ENCODE measurements at regions of chr10 and their contacts with region 1.

Region 1: DNA sequence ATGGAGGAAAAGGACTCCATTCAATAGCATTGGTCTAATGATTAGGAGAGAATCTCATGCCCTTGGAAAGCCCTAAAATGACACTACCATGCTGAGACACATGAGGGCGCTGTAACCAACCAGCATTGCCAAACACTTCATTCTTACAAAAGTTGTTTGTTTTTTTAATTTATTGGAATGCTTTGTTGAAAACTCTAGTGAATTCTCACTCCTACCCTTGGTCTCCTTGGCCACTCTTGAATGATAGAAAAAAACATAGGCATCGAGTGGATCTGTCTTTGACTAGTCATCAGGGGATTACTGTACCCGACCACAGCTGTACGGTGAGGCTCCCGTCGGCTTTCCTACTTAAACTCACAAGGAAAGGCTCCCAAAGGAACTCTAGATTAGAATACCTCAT is 29.3 kb upstream of the ADD3 start:
- DNase-seq: no peak
- ATAC-seq: peak; percentile 77
- H3K4me3 ChIP-seq: no peak overlapping the region
- H3K27ac ChIP-seq: no peak overlapping the region
- H3K4me1 ChIP-seq: no peaks in the 10 kb centered on the region
- H3K27me3 ChIP-seq: peaks cover 0 to 2% of the 10 kb centered on the region in 2 experiments; a peak in 1 of 4 replicates
- CTCF ChIP-seq: peak; percentile 74 to 86 (median 81)
- EP300 ChIP-seq: no peak
- POLR2A ChIP-seq: no peak
- RAD21 ChIP-seq: peak; percentile 82

Region 2: GRCh38 chr10:109773288-109774120 is 205.0 kb before region 1 on chr10:
- CTCF ChIA-PET with region 1: no interaction called
- POLR2A ChIA-PET with region 1: no interaction called
- RAD21 ChIA-PET with region 1: no interaction called
- SMC1A ChIA-PET with region 1: no interaction called
- in situ Hi-C with region 1: no loop called
- intact Hi-C with region 1: no loop called
- DNase-seq: no peak
- ATAC-seq: peak; percentile 73
- H3K4me3 ChIP-seq: no peak overlapping the region
- H3K27ac ChIP-seq: no peak overlapping the region
- H3K4me1 ChIP-seq: no peaks in the 10 kb centered on the region
- H3K27me3 ChIP-seq: no peaks in the 10 kb centered on the region
- CTCF ChIP-seq: peak; percentile 44 to 53 (median 44)
- EP300 ChIP-seq: no peak
- POLR2A ChIP-seq: no peak
- RAD21 ChIP-seq: peak; percentile 45

Region 3: DNA sequence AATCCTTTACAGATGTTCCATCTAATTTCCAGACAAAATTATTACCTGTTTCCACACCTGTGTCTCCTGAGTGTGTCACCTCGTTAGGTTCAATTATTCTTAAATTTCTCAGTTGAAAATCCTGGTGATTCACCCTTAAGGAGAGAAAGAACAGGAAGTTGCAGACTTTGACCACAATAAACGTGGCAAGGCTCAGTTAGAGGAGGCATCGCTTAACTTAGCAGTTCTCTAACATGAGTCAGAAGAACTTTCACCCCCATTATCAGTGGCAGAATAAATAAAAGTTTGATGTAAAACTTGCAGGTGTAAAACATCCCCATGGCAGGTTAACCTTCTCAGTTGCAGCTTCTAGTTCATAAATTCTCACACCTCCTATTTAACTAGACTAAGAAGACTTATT is 63.5 kb before region 1 on chr10:
- CTCF ChIA-PET with region 1: interaction called, 17 read pairs
- POLR2A ChIA-PET with region 1: interaction called, 5 read pairs
- RAD21 ChIA-PET with region 1: no interaction called
- SMC1A ChIA-PET with region 1: no interaction called
- in situ Hi-C with region 1: no loop called
- intact Hi-C with region 1: no loop called
- DNase-seq: peak; percentile 41
- ATAC-seq: peak; percentile 18; the same call in 2 of the 3 replicates
- H3K4me3 ChIP-seq: no peak overlapping the region
- H3K27ac ChIP-seq: peak overlapping the region; percentile 25; the same call in 1 of the 2 replicates
- H3K4me1 ChIP-seq: peaks cover 61% of the 10 kb centered on the region
- H3K27me3 ChIP-seq: no peaks in the 10 kb centered on the region
- CTCF ChIP-seq: no peak
- EP300 ChIP-seq: no peak
- POLR2A ChIP-seq: no peak
- RAD21 ChIP-seq: no peak

Region 4: DNA sequence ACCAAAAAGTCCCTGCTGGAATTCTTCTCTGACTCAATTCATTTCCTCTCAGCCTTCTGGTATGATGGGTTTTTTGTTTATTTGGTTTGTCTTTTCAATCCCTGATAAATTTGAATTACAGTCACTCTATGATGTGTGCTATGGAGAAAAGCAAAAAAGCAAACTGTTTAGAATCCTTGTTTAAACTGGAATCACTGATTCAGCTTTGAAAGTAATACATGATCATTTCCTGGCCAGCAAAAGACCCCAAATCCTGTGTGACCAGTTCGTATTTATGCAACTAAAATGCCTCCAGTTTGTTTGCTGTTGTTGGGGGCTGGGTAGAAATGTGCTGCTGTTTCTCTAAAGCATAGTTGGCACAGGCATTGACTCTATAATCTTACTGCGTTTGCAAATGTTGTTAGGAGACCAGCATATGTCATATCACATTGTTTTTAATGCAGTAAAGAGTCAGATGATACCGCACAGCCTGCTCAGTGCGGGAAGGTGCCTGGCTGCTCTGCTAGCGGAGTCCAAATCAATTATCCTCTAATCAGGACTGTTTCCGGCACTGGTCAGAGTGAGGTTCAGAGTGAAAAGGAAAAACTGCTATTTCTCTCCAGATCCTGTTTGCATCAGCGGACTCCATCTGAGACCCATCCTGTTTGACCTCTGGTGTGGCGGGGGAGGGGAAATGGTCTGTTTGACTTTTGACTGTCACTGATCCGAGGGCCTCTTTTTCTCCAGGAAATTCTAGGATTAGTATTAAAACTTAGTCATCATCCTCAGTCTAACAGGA is 11.3 kb before region 1 on chr10:
- CTCF ChIA-PET with region 1: interaction called, 30 read pairs
- POLR2A ChIA-PET with region 1: no interaction called
- RAD21 ChIA-PET with region 1: interaction called, 3 read pairs
- SMC1A ChIA-PET with region 1: interaction called, 5 read pairs
- in situ Hi-C with region 1: no loop called
- intact Hi-C with region 1: no loop called
- DNase-seq: no peak
- ATAC-seq: no peak
- H3K4me3 ChIP-seq: no peak overlapping the region
- H3K27ac ChIP-seq: no peak overlapping the region
- H3K4me1 ChIP-seq: no peaks in the 10 kb centered on the region
- H3K27me3 ChIP-seq: no peaks in the 10 kb centered on the region; a peak in 2 of 4 replicates
- CTCF ChIP-seq: no peak
- EP300 ChIP-seq: no peak
- POLR2A ChIP-seq: no peak
- RAD21 ChIP-seq: no peak

Region 5: GRCh38 chr10:110007701-110008517 is 29.4 kb after region 1 on chr10 and contains the start of gene ADD3:
- CTCF ChIA-PET with region 1: interaction called, 97 read pairs
- POLR2A ChIA-PET with region 1: no interaction called
- RAD21 ChIA-PET with region 1: interaction called, 48 read pairs
- SMC1A ChIA-PET with region 1: interaction called, 14 read pairs
- in situ Hi-C with region 1: no loop called
- intact Hi-C with region 1: loop called (anchors 5 kb)
- DNase-seq: peak; percentile 48
- ATAC-seq: peak; percentile 81
- H3K4me3 ChIP-seq: peak within 1 kb of the TSS; percentile 90
- H3K27ac ChIP-seq: peak within 1 kb of the TSS; percentile 56
- H3K4me1 ChIP-seq: peaks cover 27% of the 10 kb centered on the region
- H3K27me3 ChIP-seq: no peaks in the 10 kb centered on the region
- CTCF ChIP-seq: no peak
- EP300 ChIP-seq: no peak
- POLR2A ChIP-seq: peak; percentile 79
- RAD21 ChIP-seq: no peak
- polyA plus RNA-seq, gene ADD3: 27.3 to 28.5 TPM

Region 6: DNA sequence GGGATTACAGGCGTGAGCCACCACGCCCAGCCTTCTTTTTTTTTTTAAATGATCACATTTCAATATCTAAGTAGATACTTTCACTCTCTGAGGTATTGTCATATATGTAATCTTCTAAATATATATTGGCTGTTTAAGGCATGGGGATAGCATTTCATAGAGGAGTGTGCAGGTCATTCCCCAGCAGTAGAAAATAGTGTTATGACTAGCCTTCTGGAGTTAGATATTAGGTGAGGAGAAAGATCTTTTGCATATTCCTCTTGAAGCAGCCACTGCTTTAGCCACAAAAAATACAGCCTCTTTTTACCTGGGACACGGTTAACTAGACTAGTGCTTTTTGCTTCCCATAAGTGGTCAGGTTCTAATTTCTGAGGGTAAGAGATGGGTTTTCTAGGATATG is 58.2 kb after region 1 on chr10:
- CTCF ChIA-PET with region 1: interaction called, 77 read pairs
- POLR2A ChIA-PET with region 1: interaction called, 14 read pairs
- RAD21 ChIA-PET with region 1: interaction called, 31 read pairs
- SMC1A ChIA-PET with region 1: interaction called, 22 read pairs
- in situ Hi-C with region 1: no loop called
- intact Hi-C with region 1: loop called (anchors 1 kb)
- DNase-seq: peak; percentile 48
- ATAC-seq: peak; percentile 78
- H3K4me3 ChIP-seq: peak overlapping the region; percentile 20
- H3K27ac ChIP-seq: peak overlapping the region; percentile 42; the same call in 1 of the 2 replicates
- H3K4me1 ChIP-seq: peaks cover 16% of the 10 kb centered on the region
- H3K27me3 ChIP-seq: no peaks in the 10 kb centered on the region
- CTCF ChIP-seq: no peak
- EP300 ChIP-seq: 0 out of 4 replicates have a peak, but pooled peaks of 1 of the 2 experiments have one; percentile 17
- POLR2A ChIP-seq: no peak
- RAD21 ChIP-seq: no peak

Region 7: DNA sequence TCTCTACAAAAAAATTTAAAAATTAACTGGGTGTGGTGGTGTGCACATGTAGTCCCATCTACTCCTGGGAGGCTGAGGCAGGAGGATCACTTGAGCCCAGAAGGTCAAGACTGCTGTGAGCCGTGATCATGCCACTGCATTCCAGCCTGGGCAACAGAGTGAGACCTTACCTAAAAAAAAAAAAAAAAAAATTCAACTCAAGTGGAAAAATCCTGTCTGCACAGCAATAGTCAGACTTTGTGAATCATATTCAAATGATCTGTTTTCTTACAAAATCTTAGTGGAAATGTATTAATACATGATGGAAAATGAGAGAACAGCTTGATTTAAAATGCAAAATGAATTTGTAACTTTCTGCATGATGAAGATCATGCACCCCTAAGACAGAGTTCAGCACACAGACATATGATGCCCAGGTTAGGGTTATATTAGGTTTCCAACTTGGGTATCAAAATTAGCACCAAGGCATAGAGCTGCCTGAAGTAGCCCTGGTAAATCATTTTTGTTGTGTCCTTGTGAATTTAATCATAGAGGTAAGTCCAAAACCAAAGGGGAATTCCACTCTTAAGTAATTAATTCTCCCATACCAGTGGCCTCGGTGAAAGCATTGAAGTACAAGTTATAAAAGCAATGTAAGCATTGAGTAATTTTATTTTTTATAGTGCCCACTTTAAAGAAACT is 123.1 kb after region 1 on chr10:
- CTCF ChIA-PET with region 1: interaction called, 5 read pairs
- POLR2A ChIA-PET with region 1: no interaction called
- RAD21 ChIA-PET with region 1: interaction called, 3 read pairs
- SMC1A ChIA-PET with region 1: interaction called, 10 read pairs
- in situ Hi-C with region 1: no loop called
- intact Hi-C with region 1: no loop called
- DNase-seq: no peak
- ATAC-seq: peak; percentile 82
- H3K4me3 ChIP-seq: no peak overlapping the region
- H3K27ac ChIP-seq: no peak overlapping the region
- H3K4me1 ChIP-seq: peaks cover 3% of the 10 kb centered on the region
- H3K27me3 ChIP-seq: no peaks in the 10 kb centered on the region
- CTCF ChIP-seq: no peak
- EP300 ChIP-seq: no peak
- POLR2A ChIP-seq: no peak
- RAD21 ChIP-seq: no peak

Measured in GM12878 (cell line).